CD8-positive, alpha-beta T cell (primary cell): ENCODE measurements at regions of chr16 and their contacts with region 1.

Region 1: DNA sequence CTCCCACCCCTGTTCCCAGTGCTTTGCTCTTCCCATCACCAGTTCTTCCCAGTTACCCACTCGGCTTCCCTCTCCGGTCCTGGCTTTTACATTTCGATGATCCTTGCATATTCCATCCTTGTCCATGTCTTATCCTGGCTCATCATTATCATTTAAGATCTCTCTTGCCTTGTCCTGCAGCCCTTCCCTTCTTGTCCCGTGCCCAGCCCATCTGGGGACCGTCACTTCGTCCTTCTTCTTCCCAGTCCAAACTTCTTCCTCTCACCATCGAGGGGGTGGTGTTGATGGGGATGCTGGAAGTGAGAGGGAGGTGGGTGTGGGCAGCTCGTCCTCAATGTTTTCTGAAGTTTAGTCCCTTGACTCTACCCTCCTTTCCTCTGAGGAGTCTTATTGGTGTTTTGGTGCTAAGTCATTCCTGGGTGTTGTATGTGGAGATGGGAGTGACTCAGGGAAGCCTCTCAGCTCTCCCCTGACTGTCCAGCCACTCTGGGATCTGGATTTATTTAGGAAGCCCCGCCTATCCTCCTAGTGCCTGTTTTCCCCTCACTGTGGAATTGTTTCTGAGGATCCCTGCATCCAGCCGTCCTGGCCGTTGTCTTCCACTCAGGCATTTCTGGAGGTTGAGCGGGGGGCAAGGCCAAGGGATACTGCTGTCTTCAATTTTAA is 975 bp downstream of the SNX29 start:
- DNase-seq: no peak
- ATAC-seq: no peak
- H3K4me3 ChIP-seq: peak overlapping the region; percentile 65 to 81
- H3K4me3 Mint-ChIP-seq: peak overlapping the region; percentile 91
- H3K27ac ChIP-seq: no peak overlapping the region
- H3K27ac Mint-ChIP-seq: peak overlapping the region; percentile 89
- H3K4me1 ChIP-seq: peaks cover 16% of the 10 kb centered on the region
- H3K4me1 Mint-ChIP-seq: peaks cover 42% of the 10 kb centered on the region
- H3K27me3 ChIP-seq: no peaks in the 10 kb centered on the region
- H3K27me3 Mint-ChIP-seq: no peaks in the 10 kb centered on the region
- CTCF ChIP-seq: no peak

Region 2: DNA sequence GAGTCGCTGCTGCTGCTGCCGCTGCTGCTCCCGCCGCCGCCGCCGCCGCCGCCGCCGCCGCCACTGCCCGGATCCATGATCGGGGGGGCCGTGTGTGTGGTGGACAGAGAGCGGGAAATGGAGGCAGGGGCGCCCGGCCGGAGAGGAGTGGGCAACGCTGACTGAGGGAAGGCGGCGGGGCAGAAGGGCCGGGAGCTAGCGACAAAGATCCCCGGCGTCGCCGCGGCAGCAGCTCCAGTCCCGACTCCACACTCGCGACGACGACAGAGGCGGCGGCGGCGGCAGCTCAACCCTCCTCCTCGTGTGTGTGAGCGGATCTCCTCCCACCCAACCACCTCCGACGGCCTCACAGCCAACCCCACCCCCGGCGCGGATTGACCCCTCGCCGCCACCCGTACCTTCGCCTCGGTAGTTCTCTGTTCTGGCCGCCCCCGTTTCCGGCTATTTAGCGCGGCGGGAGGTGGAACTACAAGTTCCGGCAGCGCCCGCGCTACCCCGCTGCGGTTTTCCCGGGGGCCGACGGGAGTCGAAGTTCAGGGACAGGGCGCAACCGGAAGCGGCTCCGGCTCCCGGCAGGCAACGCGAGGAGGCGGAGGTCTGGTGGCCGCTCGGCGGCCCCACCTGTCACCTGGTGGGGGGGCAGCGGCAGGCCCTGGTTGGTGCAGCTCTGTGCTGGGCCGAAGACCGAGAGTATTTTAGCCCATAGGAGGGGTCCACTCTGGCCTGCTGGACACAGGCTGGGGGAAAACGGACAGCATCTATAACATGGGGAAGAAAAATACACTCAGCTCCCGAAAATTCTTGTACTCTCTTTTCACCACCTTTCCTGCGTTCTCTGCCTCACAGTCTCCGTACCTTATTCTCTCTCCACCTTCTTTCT is 61.6 kb before region 1 on chr16 and contains the start of gene GSPT1:
- CTCF ChIA-PET with region 1: no interaction called
- POLR2A ChIA-PET with region 1: interaction called, 4 read pairs
- intact Hi-C with region 1: loop called (anchors 1 kb)
- DNase-seq: peak; percentile 98 to 100 (median 99)
- ATAC-seq: peak; percentile 89
- H3K4me3 ChIP-seq: peak within 1 kb of the TSS; percentile 52 to 68
- H3K4me3 Mint-ChIP-seq: peak within 1 kb of the TSS; percentile 94
- H3K27ac ChIP-seq: peak within 1 kb of the TSS; percentile 68 to 75
- H3K27ac Mint-ChIP-seq: peak within 1 kb of the TSS; percentile 98
- H3K4me1 ChIP-seq: peaks cover 24% of the 10 kb centered on the region
- H3K4me1 Mint-ChIP-seq: peaks cover 29% of the 10 kb centered on the region
- H3K27me3 ChIP-seq: no peaks in the 10 kb centered on the region
- H3K27me3 Mint-ChIP-seq: no peaks in the 10 kb centered on the region
- CTCF ChIP-seq: no peak
- total RNA-seq, gene GSPT1: 296 to 297 TPM

Region 3: GRCh38 chr16:12803203-12804097 is 825.9 kb after region 1 on chr16 and contains the start of gene CPPED1:
- CTCF ChIA-PET with region 1: no interaction called
- POLR2A ChIA-PET with region 1: interaction called, 4 read pairs
- intact Hi-C with region 1: loop called in 1 of 2 experiments (anchors 1 kb)
- DNase-seq: peak; percentile 83 to 95 (median 88)
- ATAC-seq: peak; percentile 94
- H3K4me3 ChIP-seq: peak within 1 kb of the TSS; percentile 71 to 86
- H3K4me3 Mint-ChIP-seq: peak within 1 kb of the TSS; percentile 88
- H3K27ac ChIP-seq: peak within 1 kb of the TSS; percentile 55 to 87
- H3K27ac Mint-ChIP-seq: peak within 1 kb of the TSS; percentile 92
- H3K4me1 ChIP-seq: peaks cover 9% of the 10 kb centered on the region
- H3K4me1 Mint-ChIP-seq: peaks cover 22% of the 10 kb centered on the region
- H3K27me3 ChIP-seq: no peaks in the 10 kb centered on the region
- H3K27me3 Mint-ChIP-seq: peaks cover 3% of the 10 kb centered on the region
- CTCF ChIP-seq: no peak
- total RNA-seq, gene CPPED1: 0.89 to 1.1 TPM